ENCODE measurements at regions of chr20 and their contacts with region 1.

Region 1: GRCh38 chr20:60857708-60858107 is 394.4 kb upstream of the CDH4 start:
- DNase-seq: no peak

Region 2: GRCh38 chr20:60137629-60138245 is 720.0 kb before region 1 on chr20:
- intact Hi-C with region 1: no loop called
- DNase-seq: no peak

Region 3: DNA sequence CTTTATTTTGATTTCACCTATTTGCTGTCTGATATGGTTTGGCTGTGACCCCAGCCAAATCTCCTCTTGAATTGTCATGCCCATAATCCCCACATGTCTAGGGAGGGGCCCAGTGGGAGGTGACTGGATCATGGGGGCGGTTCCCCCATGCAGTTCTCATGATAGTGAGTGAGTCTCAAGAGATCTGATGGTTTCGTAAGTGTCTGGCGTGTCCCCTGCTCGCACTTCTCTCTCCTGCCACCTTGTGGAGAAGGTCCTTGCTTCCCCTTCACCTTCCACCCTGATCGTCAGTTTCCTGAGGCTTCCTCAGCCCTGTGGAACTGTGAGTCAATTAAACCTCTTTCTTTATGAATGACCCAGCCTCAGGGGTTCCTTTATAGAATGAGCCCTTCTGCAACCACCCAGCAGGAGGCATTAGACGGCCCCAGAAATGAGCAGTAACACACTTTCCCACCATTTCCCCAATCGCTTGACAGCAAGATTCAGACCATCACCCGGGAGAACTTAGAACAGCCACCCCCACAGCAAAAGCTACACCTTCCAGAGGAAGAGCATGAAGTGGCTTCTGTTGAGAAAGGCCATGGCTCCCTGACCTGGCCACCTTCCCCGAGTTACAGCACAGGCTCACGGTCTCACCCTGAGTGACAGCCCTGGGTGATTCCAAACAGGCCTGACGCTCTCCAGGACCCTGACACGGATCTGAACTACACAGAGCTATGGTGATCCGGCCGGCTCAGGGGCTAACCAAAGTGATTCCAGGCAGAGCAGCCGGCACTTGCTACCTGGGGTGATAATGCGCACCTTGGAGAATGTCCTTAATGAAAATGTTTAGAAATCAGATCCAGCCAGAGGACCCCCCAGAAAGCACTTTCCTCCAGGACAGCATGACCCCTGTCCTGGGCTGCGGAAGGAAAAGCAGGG is 263.1 kb after region 1 on chr20:
- intact Hi-C with region 1: loop called (anchors 5 kb)
- DNase-seq: peak; percentile 27

Region 4: DNA sequence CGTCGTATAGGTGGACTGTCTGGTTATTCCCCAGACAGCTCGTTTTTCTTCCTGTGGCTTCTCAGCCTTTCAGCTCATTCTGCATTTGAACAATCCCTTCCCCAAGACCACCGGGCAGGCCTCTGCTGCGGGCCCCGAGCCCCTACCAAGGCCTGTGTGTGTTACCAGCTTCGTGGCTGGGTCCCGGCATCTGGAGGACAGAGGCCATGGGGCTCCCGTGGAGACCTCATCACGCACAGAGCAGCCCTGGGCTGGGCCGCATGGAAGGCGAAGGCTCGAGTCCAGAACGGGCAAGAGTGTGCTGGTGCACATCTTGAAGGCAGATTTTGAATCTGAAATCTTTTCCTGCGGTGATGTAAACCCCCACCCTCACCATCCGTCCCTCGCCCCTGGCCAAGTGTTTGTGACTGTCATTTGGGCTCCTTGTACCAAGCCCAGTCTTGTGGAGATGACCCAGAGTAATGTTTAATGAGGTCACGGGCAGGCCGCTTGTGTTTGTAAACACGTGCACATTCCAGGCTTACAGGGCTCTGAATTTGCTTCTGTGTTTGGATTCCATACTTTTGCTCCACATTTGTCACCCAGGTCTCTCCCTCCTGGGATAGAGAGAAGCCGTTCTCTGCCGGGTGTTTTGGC is 513.9 kb after region 1 on chr20:
- intact Hi-C with region 1: no loop called
- DNase-seq: no peak

Region 5: GRCh38 chr20:61516346-61517215 is 658.9 kb after region 1 on chr20:
- intact Hi-C with region 1: no loop called
- DNase-seq: no peak

Measured in cardiac septum (tissue), 1 donor.